Left colon (tissue), 2 donors: ENCODE measurements at regions of chr6 and their contacts with region 1.

Region 1: DNA sequence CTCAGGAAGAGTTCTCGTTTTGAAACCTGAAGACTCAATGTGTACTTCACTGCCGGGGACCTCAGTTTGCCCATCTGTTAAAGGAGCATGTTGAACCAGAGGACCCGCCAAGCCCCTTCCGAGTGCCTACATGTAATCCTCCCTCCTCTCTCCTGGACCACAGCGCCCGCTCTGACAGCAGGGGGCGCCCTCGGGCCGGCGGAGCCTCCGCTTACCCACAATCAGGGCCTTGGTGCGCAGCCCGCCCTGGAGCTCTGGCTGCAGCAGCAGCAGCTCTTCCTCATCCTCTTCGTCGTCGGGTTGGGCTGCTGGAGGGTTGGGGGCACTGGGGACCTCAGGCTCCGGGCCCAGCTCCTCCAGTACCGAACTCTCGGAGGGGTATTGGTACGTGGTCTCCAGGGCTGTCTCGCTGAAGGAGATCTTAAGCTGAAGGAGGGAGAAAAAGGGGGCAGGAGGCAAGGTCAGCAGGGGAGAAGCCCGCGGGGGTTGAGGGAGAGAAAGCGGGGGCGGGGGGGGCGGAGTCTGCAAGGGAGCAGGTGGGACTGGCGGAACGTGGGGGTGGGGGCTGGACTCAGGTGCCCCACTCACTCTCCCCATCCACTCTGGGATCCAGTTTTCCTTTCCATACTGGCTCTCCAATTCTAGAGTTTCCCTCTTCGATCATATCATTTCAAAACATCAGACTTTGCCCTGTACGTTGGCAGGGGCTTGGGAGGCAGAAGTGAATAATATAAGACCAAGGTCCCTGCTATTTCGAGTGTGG is 6.3 kb upstream of the DHX16 start:
- DNase-seq: peak; percentile 83 to 89
- ATAC-seq: peak; percentile 88

Region 2: GRCh38 chr6:30719791-30720737 is 40.9 kb after region 1 on chr6 and contains the start of gene TUBB:
- intact Hi-C with region 1: loop called (anchors 2 to 5 kb)
- DNase-seq: peak; percentile 97 to 98
- ATAC-seq: peak; percentile 71
- total RNA-seq, gene TUBB: 149 to 195 TPM

Region 3: DNA sequence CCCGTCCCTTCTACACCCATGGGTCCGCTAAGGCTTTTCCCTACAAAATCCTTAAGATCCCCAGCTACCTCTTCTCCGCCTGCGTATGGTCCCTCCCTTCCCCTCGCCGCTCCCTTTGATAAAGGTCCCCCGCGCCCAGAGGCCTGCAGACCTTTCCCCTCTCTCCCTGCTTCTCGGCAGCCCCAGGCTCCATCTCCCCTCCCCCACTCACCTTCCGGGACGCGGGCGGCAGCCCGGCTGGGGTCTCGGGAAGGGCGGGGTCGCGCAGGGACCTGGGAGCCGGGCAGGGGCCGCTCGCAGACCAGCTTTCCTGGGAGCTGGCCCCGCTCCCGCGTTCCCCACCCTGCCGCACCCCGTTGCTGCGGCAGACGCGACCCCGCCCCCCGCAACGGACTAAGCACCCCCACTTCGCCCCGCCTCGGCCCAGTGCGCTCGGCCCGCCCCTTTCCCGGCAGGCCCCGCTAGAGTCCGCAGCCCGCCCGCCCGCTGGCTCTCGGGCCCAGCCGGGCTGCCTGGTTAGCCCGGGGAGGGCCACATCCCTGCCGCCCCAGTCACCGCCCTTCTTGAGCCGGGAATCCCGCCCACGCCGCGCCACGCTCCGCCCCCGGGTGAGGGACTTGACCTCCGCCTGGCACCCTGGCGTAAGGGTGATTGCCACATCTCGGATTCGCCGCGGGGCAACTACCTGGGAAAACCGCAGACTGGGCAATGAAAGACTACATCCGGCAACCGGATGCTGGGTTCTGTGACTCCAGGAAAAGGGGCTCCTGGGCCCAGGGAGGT is 63.4 kb after region 1 on chr6 and contains the start of gene FLOT1:
- intact Hi-C with region 1: loop called in 1 of 2 experiments (anchors 5 kb)
- DNase-seq: peak; percentile 99
- ATAC-seq: peak; percentile 76
- total RNA-seq, gene FLOT1: 130 to 137 TPM

Region 4: DNA sequence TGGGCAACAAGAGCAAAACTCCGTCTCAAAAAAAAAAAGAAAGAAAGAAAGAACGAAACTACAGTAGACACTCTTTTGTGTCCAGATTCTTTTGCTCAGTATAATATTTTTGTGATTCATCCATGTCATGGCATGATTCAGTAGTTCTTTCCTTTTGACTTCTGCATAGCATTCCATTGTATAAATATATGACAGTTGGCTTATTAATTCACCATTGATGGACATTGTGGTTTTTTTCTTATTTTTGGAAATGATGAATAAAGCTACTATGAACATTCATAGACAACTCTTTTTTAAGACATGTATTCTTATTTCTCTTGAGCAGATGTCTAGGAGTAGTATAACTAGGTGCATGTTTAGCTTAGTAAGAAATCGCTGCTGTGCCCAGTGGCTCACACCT is 75.5 kb after region 1 on chr6:
- intact Hi-C with region 1: no loop called
- DNase-seq: no peak
- ATAC-seq: no peak